B cell (primary cell): ENCODE measurements at regions of chr9 and their contacts with region 1.

Region 1: DNA sequence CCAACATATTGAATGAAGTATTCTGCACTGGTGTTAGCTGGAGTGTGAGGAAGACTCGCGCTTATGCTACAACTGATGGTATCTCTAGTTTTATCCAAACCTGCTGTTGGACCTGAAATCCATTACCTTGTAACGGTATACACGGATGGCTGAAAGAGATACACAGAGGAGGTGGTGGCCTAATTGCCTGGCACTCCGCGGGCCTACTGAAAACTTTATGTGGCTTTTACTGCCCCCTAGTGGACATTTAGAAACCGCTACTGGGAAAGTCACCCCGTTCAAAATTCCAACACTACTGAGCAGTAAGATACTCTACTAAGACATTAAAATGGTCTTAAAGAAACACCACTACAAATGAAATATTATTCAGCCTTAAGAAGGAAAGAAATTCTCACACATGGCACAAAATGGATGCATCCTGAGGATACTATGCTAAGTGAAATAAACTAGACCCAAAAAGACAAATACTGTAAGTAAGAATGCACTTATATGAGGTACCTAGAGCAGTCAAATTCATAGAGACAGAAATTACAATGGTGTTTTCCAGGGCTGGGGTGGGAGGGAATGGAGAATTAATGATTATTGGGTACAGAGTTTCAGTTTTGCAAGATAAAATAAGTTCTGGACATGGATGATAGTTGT is 100.4 kb downstream of the TTLL11 start:
- DNase-seq: peak; percentile 75
- ATAC-seq: peak; percentile 82
- H3K4me3 ChIP-seq: no peak overlapping the region
- H3K4me3 Mint-ChIP-seq: no peak overlapping the region
- H3K27ac ChIP-seq: no peak overlapping the region
- H3K27ac Mint-ChIP-seq: no peak overlapping the region
- H3K4me1 ChIP-seq: peaks cover 0 to 3% of the 10 kb centered on the region in 2 donors
- H3K4me1 Mint-ChIP-seq: peaks cover 9% of the 10 kb centered on the region
- H3K27me3 ChIP-seq: no peaks in the 10 kb centered on the region
- H3K27me3 Mint-ChIP-seq: no peaks in the 10 kb centered on the region
- CTCF ChIP-seq: peak; percentile 91

Region 2: GRCh38 chr9:121621113-121621449 is 371.6 kb before region 1 on chr9:
- CTCF ChIA-PET with region 1: no interaction called
- POLR2A ChIA-PET with region 1: no interaction called
- intact Hi-C with region 1: loop called (anchors 1 kb)
- DNase-seq: no peak
- ATAC-seq: no peak
- H3K4me3 ChIP-seq: no peak overlapping the region
- H3K4me3 Mint-ChIP-seq: no peak overlapping the region
- H3K27ac ChIP-seq: no peak overlapping the region
- H3K27ac Mint-ChIP-seq: no peak overlapping the region
- H3K4me1 ChIP-seq: no peaks in the 10 kb centered on the region
- H3K4me1 Mint-ChIP-seq: peaks cover 2% of the 10 kb centered on the region
- H3K27me3 ChIP-seq: peaks cover 0 to 5% (median 0%) of the 10 kb centered on the region in 4 experiments
- H3K27me3 Mint-ChIP-seq: peaks cover 20% of the 10 kb centered on the region
- CTCF ChIP-seq: no peak

Region 3: GRCh38 chr9:121698627-121699570 is 293.8 kb before region 1 on chr9:
- CTCF ChIA-PET with region 1: interaction called, 4 read pairs
- POLR2A ChIA-PET with region 1: no interaction called
- intact Hi-C with region 1: loop called (anchors 1 kb)
- DNase-seq: peak; percentile 63
- ATAC-seq: peak; percentile 67
- H3K4me3 ChIP-seq: peak overlapping the region in 3 of 5 experiments; percentile 12 to 56 (median 52)
- H3K4me3 Mint-ChIP-seq: peak overlapping the region; percentile 71
- H3K27ac ChIP-seq: no peak overlapping the region
- H3K27ac Mint-ChIP-seq: peak overlapping the region; percentile 41
- H3K4me1 ChIP-seq: peaks cover 27 to 31% of the 10 kb centered on the region in 2 donors
- H3K4me1 Mint-ChIP-seq: peaks cover 29% of the 10 kb centered on the region
- H3K27me3 ChIP-seq: peaks cover 0 to 38% (median 25%) of the 10 kb centered on the region in 4 experiments
- H3K27me3 Mint-ChIP-seq: peaks cover 20% of the 10 kb centered on the region
- CTCF ChIP-seq: no peak

Region 4: GRCh38 chr9:121744002-121744686 is 248.5 kb before region 1 on chr9:
- CTCF ChIA-PET with region 1: interaction called, 28 read pairs
- POLR2A ChIA-PET with region 1: no interaction called
- intact Hi-C with region 1: no loop called
- DNase-seq: peak; percentile 25
- ATAC-seq: peak; percentile 81
- H3K4me3 ChIP-seq: no peak overlapping the region
- H3K4me3 Mint-ChIP-seq: no peak overlapping the region
- H3K27ac ChIP-seq: no peak overlapping the region
- H3K27ac Mint-ChIP-seq: no peak overlapping the region
- H3K4me1 ChIP-seq: no peaks in the 10 kb centered on the region
- H3K4me1 Mint-ChIP-seq: peaks cover 5% of the 10 kb centered on the region
- H3K27me3 ChIP-seq: peaks cover 0 to 2% (median 0%) of the 10 kb centered on the region in 4 experiments
- H3K27me3 Mint-ChIP-seq: no peaks in the 10 kb centered on the region
- CTCF ChIP-seq: peak; percentile 27

Region 5: GRCh38 chr9:121944716-121945191 is 47.9 kb before region 1 on chr9:
- CTCF ChIA-PET with region 1: interaction called, 3 read pairs
- POLR2A ChIA-PET with region 1: no interaction called
- intact Hi-C with region 1: loop called (anchors 2 kb)
- DNase-seq: no peak
- ATAC-seq: no peak
- H3K4me3 ChIP-seq: no peak overlapping the region
- H3K4me3 Mint-ChIP-seq: peak overlapping the region; percentile 81
- H3K27ac ChIP-seq: no peak overlapping the region
- H3K27ac Mint-ChIP-seq: peak overlapping the region; percentile 93
- H3K4me1 ChIP-seq: peaks cover 35 to 68% of the 10 kb centered on the region in 2 donors
- H3K4me1 Mint-ChIP-seq: peaks cover 40% of the 10 kb centered on the region
- H3K27me3 ChIP-seq: no peaks in the 10 kb centered on the region
- H3K27me3 Mint-ChIP-seq: no peaks in the 10 kb centered on the region
- CTCF ChIP-seq: no peak

Region 6: DNA sequence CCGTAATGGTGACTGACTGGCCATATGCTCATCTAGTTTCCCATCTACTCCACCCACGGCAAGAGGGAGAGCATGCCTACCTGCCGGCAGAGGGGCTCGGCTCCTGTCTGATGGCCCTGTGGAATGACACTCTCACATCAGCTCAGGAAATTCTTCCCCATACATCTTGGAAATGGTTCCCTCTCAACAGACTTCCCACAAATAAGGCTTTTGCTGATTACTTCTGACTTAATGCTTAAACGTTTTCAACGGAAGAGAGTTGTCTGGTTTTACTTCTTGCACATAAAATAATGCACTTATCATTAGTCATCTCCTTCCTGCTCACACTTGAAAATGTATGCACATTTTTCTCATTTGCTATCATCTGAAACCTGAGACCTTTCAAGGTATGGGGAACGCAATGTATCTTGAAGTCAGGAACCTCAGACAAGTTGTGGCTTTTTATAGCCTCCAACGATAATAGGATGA is 29.1 kb before region 1 on chr9:
- CTCF ChIA-PET with region 1: no interaction called
- POLR2A ChIA-PET with region 1: no interaction called
- intact Hi-C with region 1: no loop called
- DNase-seq: no peak
- ATAC-seq: no peak
- H3K4me3 ChIP-seq: no peak overlapping the region
- H3K4me3 Mint-ChIP-seq: no peak overlapping the region
- H3K27ac ChIP-seq: no peak overlapping the region
- H3K27ac Mint-ChIP-seq: no peak overlapping the region
- H3K4me1 ChIP-seq: no peaks in the 10 kb centered on the region
- H3K4me1 Mint-ChIP-seq: peaks cover 2% of the 10 kb centered on the region
- H3K27me3 ChIP-seq: no peaks in the 10 kb centered on the region
- H3K27me3 Mint-ChIP-seq: no peaks in the 10 kb centered on the region
- CTCF ChIP-seq: no peak